Posterior vena cava (tissue), 2 donors: ENCODE measurements at regions of chr20 and their contacts with region 1.

Region 1: DNA sequence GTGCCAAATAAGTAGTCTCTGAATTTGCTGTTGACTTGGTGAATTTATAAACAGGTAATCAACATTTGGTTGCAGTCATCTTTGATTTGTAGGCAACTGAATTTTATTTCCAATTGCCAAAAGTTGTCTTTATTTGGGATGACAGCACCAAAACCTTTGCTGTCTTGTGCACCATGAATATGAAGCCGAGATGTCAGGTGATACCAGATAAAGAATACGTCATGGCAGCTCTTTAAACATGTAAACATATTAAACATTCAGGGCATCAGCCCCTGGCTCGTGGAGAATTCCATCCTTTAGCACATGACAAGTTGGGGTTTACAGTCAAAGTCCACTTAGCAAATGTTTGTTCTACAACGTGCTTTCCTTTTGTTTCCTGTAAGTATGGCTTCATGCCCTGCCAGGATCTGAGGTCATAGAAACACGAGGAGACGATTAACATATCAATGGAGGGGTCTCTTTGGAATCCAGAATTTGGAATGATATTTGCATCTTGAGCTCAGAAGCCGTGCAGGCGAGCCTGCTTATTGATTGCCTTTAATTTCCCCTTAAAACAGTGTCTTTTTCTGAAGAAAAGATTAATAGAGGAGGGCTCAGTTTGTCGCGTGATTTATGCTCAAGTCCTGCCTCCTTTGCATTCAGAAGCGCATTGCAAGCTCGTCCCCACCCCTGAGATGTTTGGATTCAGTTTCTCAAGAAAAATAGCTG is 170.2 kb upstream of the ZNF217 start:
- DNase-seq: no peak

Region 2: GRCh38 chr20:53331151-53331973 is 432.5 kb before region 1 on chr20:
- intact Hi-C with region 1: loop called in 1 of 2 experiments (anchors 5 kb)
- DNase-seq: no peak